ENCODE measurements at regions of chr14 and their contacts with region 1.

Region 1: GRCh38 chr14:92880869-92881289 is 42.1 kb upstream of the CHGA start:
- DNase-seq: peak; percentile 58
- H3K4me3 ChIP-seq: no peak overlapping the region
- H3K27ac ChIP-seq: no peak overlapping the region
- H3K4me1 ChIP-seq: no peaks in the 10 kb centered on the region
- H3K27me3 ChIP-seq: peaks cover 2% of the 10 kb centered on the region
- CTCF ChIP-seq: peak; percentile 55 to 65

Region 2: DNA sequence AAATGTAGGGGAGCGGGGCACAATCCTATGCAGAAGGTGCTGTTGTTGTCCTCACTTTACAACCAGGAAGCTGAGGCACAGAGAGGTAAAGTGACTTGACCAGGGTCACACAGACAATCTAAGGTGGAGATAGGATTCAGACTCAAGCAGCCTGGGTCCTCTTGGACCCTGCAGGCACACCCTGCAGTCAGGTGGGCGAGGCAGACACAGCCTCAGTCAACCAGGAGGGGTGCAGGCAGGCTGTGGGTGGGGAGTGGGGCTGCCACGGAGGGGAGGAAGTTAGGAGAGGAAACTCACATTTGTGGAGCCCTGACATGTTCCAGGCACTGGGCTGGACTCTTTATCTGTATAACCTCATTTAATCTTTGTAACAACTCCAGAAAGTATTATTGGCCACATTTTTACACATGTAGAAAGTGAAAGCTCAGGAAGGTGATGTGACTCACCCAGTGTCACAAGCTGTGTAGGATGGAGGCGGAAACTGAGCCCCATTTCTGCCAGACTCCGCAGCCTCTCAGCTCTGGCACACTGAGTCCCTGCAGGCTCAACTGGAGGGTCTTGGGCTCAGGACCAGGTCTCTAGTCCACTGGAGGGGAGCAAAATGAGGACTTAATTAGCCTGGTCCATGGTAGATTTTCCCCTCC is 17.2 kb after region 1 on chr14:
- CTCF ChIA-PET with region 1: interaction called, 15 read pairs
- dilution Hi-C with region 1: no loop called
- in situ Hi-C with region 1: no loop called
- intact Hi-C with region 1: no loop called
- DNase-seq: no peak
- H3K4me3 ChIP-seq: no peak overlapping the region
- H3K27ac ChIP-seq: no peak overlapping the region
- H3K4me1 ChIP-seq: no peaks in the 10 kb centered on the region
- H3K27me3 ChIP-seq: no peaks in the 10 kb centered on the region
- CTCF ChIP-seq: no peak

Region 3: DNA sequence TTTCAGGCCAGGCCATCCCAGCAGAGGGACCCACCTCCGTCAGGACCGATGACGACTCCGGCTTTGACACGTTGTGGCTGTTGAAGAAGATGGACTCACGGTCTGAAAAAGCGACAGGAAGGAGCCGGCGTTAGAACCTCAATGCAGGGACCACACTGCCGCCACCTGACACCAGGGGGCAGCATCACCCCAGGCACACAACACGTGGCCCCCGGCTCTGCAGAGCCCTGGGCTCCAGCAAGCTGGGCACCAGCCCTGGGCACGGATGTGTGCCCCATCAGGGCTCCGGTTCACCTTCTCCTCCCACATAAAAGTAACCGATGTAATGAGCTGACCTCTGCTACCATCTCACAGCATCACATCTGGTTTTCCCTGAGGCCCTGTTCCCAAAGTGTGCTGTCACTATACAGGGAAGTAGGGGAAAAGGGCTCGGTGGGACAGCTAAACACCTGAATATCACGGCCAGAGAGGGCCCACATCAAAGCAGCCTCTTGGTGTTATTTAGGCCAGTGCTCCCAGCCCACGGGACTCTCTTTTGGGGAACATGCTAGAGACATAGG is 71.1 kb after region 1 on chr14:
- CTCF ChIA-PET with region 1: no interaction called
- dilution Hi-C with region 1: no loop called
- in situ Hi-C with region 1: no loop called
- intact Hi-C with region 1: loop called (anchors 2 kb)
- DNase-seq: peak; percentile 40
- H3K4me3 ChIP-seq: no peak overlapping the region
- H3K27ac ChIP-seq: no peak overlapping the region
- H3K4me1 ChIP-seq: no peaks in the 10 kb centered on the region
- H3K27me3 ChIP-seq: no peaks in the 10 kb centered on the region
- CTCF ChIP-seq: peak; percentile 85 to 92

Region 4: GRCh38 chr14:93137864-93138263 is 257.0 kb after region 1 on chr14:
- CTCF ChIA-PET with region 1: interaction called, 3 read pairs
- dilution Hi-C with region 1: no loop called
- in situ Hi-C with region 1: no loop called
- intact Hi-C with region 1: loop called (anchors 1 kb)
- DNase-seq: peak; percentile 13
- H3K4me3 ChIP-seq: no peak overlapping the region
- H3K27ac ChIP-seq: no peak overlapping the region
- H3K4me1 ChIP-seq: peaks cover 6% of the 10 kb centered on the region
- H3K27me3 ChIP-seq: no peaks in the 10 kb centered on the region
- CTCF ChIP-seq: no peak

Region 5: DNA sequence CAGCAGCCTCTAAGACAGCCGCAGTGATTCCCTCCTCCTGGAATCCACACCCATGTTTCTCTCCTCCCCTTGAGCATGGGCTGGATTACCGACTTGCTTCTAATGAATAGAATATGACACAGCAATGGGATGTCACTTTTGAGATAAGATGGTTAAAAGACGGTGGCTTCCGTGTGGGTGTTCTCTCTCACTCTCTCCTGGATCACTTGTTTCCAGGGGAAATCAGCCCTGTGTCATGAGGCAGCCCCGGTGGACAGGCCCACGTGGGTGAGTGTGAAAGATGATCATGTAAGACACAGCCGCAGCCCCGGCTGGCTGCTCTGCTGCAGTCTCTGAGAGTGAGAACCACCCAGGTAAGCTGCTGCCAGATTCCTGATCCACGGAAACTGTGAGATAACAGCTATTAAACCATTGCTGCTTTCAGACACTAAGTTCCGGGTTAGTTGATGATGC is 293.1 kb after region 1 on chr14:
- CTCF ChIA-PET with region 1: no interaction called
- dilution Hi-C with region 1: no loop called
- in situ Hi-C with region 1: no loop called
- intact Hi-C with region 1: loop called (anchors 1 kb)
- DNase-seq: peak; percentile 51
- H3K4me3 ChIP-seq: no peak overlapping the region
- H3K27ac ChIP-seq: no peak overlapping the region
- H3K4me1 ChIP-seq: no peaks in the 10 kb centered on the region
- H3K27me3 ChIP-seq: no peaks in the 10 kb centered on the region
- CTCF ChIP-seq: no peak

Measured in mammary epithelial cell (primary cell).